ENCODE measurements at regions of chr5 and their contacts with region 1.

Region 1: DNA sequence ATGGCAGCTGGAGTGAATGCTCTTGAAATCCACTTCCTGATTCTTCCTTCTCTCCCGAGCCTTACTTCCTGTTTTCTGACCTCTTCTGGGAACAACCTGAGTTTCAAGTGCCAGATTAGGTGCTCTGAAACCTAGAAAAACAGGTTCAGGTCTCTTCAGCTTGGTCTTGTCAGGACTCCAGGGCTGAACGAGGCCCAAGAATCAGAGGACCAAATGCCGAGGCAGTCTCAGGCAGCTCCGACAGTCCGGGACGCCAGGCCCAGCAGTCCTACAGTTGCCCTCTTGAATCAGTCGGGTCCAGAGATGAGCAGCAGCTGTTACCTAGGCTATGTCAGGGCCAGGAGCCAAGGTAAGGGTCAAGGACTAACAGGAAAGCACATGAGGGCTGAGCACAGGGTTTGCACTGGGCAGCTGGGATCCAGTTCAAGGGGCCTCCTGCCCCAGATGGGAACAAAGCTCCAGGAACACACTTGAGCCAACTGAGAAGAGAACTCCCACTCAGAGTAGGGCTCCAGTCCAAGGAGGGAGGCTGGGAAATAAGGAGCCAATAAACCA is 38.3 kb upstream of the ADRA1B start:
- DNase-seq: no peak
- H3K4me3 ChIP-seq: no peak overlapping the region
- H3K27ac ChIP-seq: peak overlapping the region; percentile 45 to 71 (median 62)
- H3K4me1 ChIP-seq: peaks cover 7 to 27% (median 16%) of the 10 kb centered on the region in 4 donors
- H3K27me3 ChIP-seq: peaks cover 0 to 8% (median 0%) of the 10 kb centered on the region in 4 donors
- CTCF ChIP-seq: no peak
- EP300 ChIP-seq: no peak
- POLR2A ChIP-seq: no peak

Region 2: GRCh38 chr5:159814810-159815585 is 63.0 kb before region 1 on chr5:
- intact Hi-C with region 1: loop called (anchors 2 kb)
- DNase-seq: no peak
- H3K4me3 ChIP-seq: no peak overlapping the region
- H3K27ac ChIP-seq: peak overlapping the region in 1 of 4 donors; percentile 31
- H3K4me1 ChIP-seq: peaks cover 0 to 13% (median 2%) of the 10 kb centered on the region in 4 donors
- H3K27me3 ChIP-seq: peaks cover 0 to 9% (median 0%) of the 10 kb centered on the region in 4 donors
- CTCF ChIP-seq: no peak
- EP300 ChIP-seq: no peak
- POLR2A ChIP-seq: no peak